Activated naive CD4-positive, alpha-beta T cell treated with anti-CD3 and anti-CD28 coated beads for 36 hours (primary cell): ENCODE measurements at regions of chr6 and their contacts with region 1.

Region 1: GRCh38 chr6:155314092-155314772 is at the start of gene TFB1M:
- DNase-seq: peak; percentile 99
- H3K4me3 Mint-ChIP-seq: peak within 1 kb of the TSS; percentile 97
- H3K27ac Mint-ChIP-seq: peak within 1 kb of the TSS; percentile 93
- H3K4me1 Mint-ChIP-seq: peaks cover 30% of the 10 kb centered on the region
- H3K27me3 Mint-ChIP-seq: no peaks in the 10 kb centered on the region
- total RNA-seq, gene TFB1M: 38.7 to 45.3 TPM

Region 2: DNA sequence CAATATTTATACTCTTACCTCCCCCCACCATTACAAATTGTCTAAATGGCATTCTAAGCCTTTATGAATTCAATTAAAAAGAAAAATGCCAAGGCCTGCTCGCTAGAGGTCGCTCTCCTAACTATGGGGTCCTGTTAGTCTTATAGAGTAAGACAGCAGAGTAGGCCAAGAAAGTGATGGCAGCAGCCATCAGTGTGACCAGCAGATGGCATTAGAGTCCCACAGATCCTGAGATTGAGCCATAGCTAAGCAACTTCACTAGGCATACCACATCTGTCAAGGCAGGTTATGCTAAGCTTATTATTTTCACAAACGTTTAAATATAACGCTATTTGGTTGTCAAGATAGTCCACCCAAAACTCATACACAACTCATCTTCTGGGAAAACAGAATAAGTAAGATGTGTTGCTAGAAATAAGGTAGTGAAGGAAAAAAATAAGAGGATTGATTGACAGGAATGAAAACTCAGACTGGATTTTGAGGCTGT is 638.6 kb before region 1 on chr6:
- CTCF ChIA-PET with region 1: interaction called, 4 read pairs
- intact Hi-C with region 1: loop called (anchors 1 kb)
- DNase-seq: peak; percentile 96
- H3K4me3 Mint-ChIP-seq: no peak overlapping the region
- H3K27ac Mint-ChIP-seq: no peak overlapping the region
- H3K4me1 Mint-ChIP-seq: no peaks in the 10 kb centered on the region
- H3K27me3 Mint-ChIP-seq: no peaks in the 10 kb centered on the region

Region 3: DNA sequence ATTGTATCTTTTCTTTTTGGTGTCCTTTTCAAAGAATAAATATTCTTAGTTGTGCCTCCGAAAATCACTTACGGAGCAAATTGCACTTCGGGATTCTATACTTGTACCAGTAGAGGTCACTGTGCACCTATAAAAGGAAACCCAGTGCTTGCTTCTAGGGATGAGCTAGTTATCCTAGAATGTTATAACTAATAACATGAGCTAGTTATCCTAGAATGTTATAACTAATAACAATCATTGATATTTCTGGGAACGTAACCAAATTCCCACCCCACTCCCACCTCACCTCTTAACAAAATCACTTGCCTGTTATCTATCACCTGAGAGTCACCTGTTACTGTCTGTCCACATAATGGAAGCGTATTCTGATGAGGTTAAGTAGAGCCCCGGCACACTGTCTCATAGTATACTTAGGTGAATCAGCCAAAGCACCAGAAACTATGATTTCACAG is 446.1 kb before region 1 on chr6:
- CTCF ChIA-PET with region 1: interaction called, 3 read pairs
- intact Hi-C with region 1: loop called (anchors 2 kb)
- DNase-seq: no peak
- H3K4me3 Mint-ChIP-seq: no peak overlapping the region
- H3K27ac Mint-ChIP-seq: no peak overlapping the region
- H3K4me1 Mint-ChIP-seq: peaks cover 18% of the 10 kb centered on the region
- H3K27me3 Mint-ChIP-seq: no peaks in the 10 kb centered on the region

Region 4: GRCh38 chr6:155188707-155189496 is 125.3 kb before region 1 on chr6:
- CTCF ChIA-PET with region 1: interaction called, 6 read pairs
- intact Hi-C with region 1: loop called (anchors 1 kb)
- DNase-seq: no peak
- H3K4me3 Mint-ChIP-seq: no peak overlapping the region
- H3K27ac Mint-ChIP-seq: no peak overlapping the region
- H3K4me1 Mint-ChIP-seq: peaks cover 50% of the 10 kb centered on the region
- H3K27me3 Mint-ChIP-seq: no peaks in the 10 kb centered on the region

Region 5: GRCh38 chr6:155418017-155418761 is 104.0 kb after region 1 on chr6:
- CTCF ChIA-PET with region 1: interaction called, 3 read pairs
- intact Hi-C with region 1: loop called (anchors 1 kb)
- DNase-seq: peak; percentile 87
- H3K4me3 Mint-ChIP-seq: peak overlapping the region; percentile 55
- H3K27ac Mint-ChIP-seq: peak overlapping the region; percentile 96
- H3K4me1 Mint-ChIP-seq: peaks cover 43% of the 10 kb centered on the region
- H3K27me3 Mint-ChIP-seq: no peaks in the 10 kb centered on the region

Region 6: DNA sequence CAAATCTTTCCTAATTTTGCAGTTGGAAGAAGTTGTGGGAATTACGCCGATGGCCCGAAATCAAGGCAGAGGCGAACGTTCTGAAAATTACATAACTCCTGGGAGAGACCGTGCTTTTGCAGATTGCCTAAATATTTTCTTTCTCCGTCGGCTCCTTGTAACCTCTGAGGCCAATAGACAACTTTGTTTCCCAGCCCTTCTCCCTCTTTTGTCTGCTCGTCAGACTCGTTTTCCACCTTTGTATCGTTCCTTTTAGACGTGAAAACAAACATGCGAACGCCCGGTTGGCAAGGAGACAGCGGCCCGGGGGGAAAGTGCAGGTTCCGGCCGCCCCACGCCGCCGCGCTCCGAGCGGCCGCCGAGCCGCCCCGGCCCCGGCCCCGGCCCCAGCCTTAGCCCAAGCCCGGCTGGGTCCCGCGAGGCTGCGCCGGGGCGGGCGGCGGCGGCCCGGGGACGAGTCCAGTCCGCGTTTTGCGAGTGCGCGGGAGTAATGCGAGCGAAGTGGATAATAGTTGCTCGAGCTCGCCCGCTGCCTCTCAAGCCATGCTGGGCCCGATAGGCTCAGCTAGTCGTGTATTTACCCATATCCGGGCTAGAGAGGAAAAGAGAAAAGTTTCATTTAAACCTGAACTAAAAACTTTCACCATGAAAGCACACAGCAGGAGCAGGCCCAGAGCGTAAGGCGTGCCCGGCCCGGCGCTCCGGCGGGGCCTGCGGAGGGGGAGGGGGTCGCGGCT is 1462.8 kb after region 1 on chr6 and contains the start of gene ARID1B:
- CTCF ChIA-PET with region 1: no interaction called
- intact Hi-C with region 1: loop called (anchors 10 kb)
- DNase-seq: peak; percentile 71
- H3K4me3 Mint-ChIP-seq: peak within 1 kb of the TSS; percentile 87
- H3K27ac Mint-ChIP-seq: peak within 1 kb of the TSS; percentile 99
- H3K4me1 Mint-ChIP-seq: peaks cover 14% of the 10 kb centered on the region
- H3K27me3 Mint-ChIP-seq: no peaks in the 10 kb centered on the region
- total RNA-seq, gene ARID1B: 42.5 to 43.2 TPM